ENCODE measurements at regions of chr18 and their contacts with region 1.

Region 1: GRCh38 chr18:62982600-62983251 is 267.4 kb downstream of the PHLPP1 start:
- DNase-seq: peak; percentile 29
- ATAC-seq: peak; percentile 58
- H3K4me3 Mint-ChIP-seq: no peak overlapping the region
- H3K27ac Mint-ChIP-seq: no peak overlapping the region
- H3K4me1 Mint-ChIP-seq: peaks cover 6% of the 10 kb centered on the region
- H3K27me3 Mint-ChIP-seq: no peaks in the 10 kb centered on the region
- CTCF ChIP-seq: peak; percentile 60

Region 2: DNA sequence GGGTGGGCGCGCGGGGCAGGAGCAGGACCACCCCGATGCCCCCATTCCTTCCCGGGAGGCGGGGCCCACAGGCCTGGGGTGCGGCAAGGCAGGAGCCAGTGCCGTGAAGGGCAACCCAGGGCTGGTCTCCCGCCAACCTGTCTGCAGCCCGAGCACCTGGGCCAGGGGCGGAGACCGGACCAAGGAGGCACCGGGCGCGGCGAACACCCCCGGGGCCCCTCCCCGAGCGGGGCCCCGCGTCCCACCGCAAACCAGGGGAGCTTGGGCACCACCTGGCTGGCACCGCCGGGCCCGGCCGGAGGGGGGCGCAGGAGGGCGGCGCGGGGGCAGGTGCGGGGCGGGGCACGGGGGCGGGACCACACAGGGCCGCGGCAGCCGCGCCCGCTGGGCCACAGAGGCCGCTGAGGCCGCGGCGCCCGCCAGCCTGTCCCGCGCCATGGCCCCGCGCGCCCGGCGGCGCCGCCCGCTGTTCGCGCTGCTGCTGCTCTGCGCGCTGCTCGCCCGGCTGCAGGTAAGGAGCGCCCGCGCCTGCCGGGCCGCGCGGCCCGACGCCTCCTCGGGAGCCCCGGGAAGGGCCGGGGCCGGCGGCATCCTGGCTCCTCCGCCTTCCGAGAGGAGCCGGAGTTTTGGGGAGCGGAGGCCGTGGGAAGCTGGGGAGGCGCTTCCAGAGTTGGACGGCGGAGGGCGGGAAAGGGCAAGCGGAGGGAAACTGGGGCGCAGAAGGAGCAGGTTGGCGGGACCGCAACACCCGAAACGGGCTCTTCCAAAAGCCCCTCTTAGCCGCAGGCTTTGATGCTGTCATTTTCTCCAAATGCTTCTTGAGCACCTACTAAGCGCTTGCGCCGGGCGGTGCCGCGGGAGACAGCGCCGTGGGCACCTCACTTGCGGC is 657.6 kb before region 1 on chr18 and contains the start of gene TNFRSF11A:
- CTCF ChIA-PET with region 1: no interaction called
- POLR2A ChIA-PET with region 1: no interaction called
- intact Hi-C with region 1: loop called (anchors 10 kb)
- DNase-seq: peak; percentile 61
- ATAC-seq: peak; percentile 93
- H3K4me3 Mint-ChIP-seq: peak within 1 kb of the TSS; percentile 76
- H3K27ac Mint-ChIP-seq: no peak within 1 kb of the TSS
- H3K4me1 Mint-ChIP-seq: peaks cover 21% of the 10 kb centered on the region
- H3K27me3 Mint-ChIP-seq: peaks cover 50% of the 10 kb centered on the region
- CTCF ChIP-seq: no peak
- total RNA-seq, gene TNFRSF11A: 0.07 and 0.24 TPM in 2 replicates

Region 3: GRCh38 chr18:62425465-62426195 is 557.1 kb before region 1 on chr18:
- CTCF ChIA-PET with region 1: no interaction called
- POLR2A ChIA-PET with region 1: no interaction called
- intact Hi-C with region 1: loop called (anchors 1 kb)
- DNase-seq: no peak
- ATAC-seq: no peak
- H3K4me3 Mint-ChIP-seq: no peak overlapping the region
- H3K27ac Mint-ChIP-seq: no peak overlapping the region
- H3K4me1 Mint-ChIP-seq: peaks cover 10% of the 10 kb centered on the region
- H3K27me3 Mint-ChIP-seq: peaks cover 3% of the 10 kb centered on the region
- CTCF ChIP-seq: peak; percentile 50

Region 4: DNA sequence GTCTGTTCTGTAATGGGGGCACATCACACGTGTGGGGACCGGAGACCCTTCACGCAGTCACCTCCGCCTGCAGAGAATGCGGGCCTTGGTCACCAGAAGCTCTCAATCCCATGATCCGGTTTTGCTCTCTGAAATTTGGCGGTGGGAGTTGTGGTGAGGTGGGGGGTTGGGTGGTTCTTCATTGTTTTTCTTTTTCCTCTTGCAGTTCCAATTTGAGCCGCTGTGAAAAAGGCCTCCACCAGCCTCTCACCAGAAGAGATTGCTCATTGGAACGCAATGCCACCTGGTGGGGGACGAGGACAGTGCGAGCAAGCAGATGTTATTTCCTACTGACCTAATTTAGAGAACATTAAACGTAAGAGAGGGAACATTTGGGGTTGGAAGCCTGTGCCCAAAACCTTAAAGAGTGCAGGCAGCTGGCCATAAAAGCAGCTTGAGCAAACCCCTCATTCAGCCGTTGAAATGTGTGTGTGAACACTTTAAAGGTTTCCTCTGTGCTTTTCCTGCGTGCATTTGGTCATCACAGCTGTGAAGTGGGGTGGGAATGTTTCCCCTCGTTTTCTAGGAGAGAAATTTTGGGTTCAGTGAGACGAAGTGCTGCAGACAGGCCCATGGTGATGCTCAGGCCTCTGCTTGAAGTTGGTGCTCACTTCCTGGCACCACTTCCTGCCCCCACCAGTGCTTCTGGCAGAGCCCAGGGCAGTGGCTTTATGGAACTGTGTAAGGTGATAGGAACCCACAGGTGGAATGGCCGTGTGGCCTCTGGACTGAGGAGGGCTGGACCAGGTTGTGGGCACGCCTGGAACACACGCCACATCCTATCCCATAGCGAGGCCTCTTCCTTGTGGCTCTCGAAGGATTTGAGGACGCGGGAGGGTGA is 398.2 kb before region 1 on chr18:
- CTCF ChIA-PET with region 1: interaction called, 37 read pairs
- POLR2A ChIA-PET with region 1: no interaction called
- intact Hi-C with region 1: loop called (anchors 1 kb)
- DNase-seq: peak; percentile 67
- ATAC-seq: peak; percentile 96
- H3K4me3 Mint-ChIP-seq: no peak overlapping the region
- H3K27ac Mint-ChIP-seq: no peak overlapping the region
- H3K4me1 Mint-ChIP-seq: peaks cover 26% of the 10 kb centered on the region
- H3K27me3 Mint-ChIP-seq: no peaks in the 10 kb centered on the region
- CTCF ChIP-seq: no peak

Region 5: DNA sequence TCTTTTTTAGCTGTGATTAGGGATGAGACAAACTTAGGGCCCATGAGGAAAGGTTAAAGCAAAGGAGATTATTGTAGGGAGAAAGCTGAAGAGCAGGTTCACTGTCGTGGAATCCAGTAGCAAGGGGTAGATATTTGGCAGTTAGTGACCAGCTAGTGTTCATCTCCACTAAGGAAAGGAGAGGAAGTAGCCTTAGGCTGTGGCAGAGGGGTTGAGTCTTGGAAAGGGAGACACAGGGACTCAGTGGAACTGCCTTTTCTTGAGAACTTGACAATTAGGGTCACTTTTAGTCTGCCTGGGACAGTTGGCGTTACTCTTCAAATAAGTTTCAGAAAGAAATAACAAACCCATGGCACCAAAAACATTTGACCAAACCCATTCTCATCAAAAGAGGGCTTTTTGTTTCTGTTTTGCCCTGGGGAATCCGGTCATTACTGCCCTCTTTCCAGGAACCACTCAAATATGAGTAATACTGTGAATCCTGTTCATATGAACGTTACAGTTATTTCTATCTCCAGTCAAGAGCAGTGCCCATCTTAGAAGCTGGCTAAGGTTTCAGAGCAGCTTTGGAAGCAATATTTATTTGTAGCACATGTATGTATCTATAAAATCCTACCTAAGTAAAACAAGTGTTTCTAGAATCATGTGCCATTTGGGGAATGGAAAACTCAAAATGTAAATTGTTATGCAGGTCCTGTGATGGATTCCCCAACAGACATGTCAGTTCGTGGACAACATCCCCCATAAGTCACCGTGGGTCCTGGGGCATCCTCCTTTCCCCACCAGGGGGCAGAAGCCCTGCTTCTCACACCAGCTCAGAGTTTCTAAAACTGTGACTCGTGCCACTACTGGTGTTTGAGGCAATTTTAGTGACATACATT is 344.7 kb before region 1 on chr18:
- CTCF ChIA-PET with region 1: interaction called, 38 read pairs
- POLR2A ChIA-PET with region 1: no interaction called
- intact Hi-C with region 1: loop called (anchors 1 kb)
- DNase-seq: peak; percentile 20
- ATAC-seq: peak; percentile 50
- H3K4me3 Mint-ChIP-seq: no peak overlapping the region
- H3K27ac Mint-ChIP-seq: no peak overlapping the region
- H3K4me1 Mint-ChIP-seq: no peaks in the 10 kb centered on the region
- H3K27me3 Mint-ChIP-seq: peaks cover 7% of the 10 kb centered on the region
- CTCF ChIP-seq: no peak

Region 6: DNA sequence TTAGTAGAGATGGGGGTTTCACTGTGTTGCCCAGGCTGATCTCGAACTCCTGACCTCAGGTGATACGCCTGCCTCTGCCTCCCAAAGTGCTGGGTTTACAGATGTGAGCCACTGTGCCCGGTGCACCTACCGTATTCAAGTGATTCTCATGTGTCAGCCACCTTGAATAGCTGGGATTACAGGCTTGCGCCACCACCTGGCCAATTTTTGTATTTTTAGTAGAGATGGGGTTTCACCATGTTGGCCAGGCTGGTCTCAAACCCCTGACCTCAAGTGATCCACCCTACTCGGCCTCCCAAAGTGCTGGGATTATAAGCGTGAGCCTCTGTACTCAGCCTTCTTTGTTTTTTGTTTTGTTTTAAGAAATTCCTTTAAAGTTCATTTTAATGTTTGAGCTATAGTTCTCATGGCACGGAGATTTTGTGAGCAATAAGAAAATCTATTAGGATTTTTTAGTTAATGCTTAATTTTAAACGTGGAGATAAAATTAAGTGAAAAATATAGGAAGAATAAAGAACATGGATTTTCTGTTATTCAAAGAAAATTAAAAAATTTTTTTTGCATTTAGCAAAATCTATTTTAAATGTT is 24.7 kb before region 1 on chr18:
- CTCF ChIA-PET with region 1: interaction called, 3 read pairs
- POLR2A ChIA-PET with region 1: no interaction called
- intact Hi-C with region 1: loop called (anchors 2 kb)
- DNase-seq: no peak
- ATAC-seq: peak; percentile 77
- H3K4me3 Mint-ChIP-seq: no peak overlapping the region
- H3K27ac Mint-ChIP-seq: no peak overlapping the region
- H3K4me1 Mint-ChIP-seq: no peaks in the 10 kb centered on the region
- H3K27me3 Mint-ChIP-seq: no peaks in the 10 kb centered on the region
- CTCF ChIP-seq: no peak

Region 7: GRCh38 chr18:63253428-63254372 is 271.0 kb after region 1 on chr18:
- CTCF ChIA-PET with region 1: no interaction called
- POLR2A ChIA-PET with region 1: no interaction called
- intact Hi-C with region 1: no loop called
- DNase-seq: no peak
- ATAC-seq: no peak
- H3K4me3 Mint-ChIP-seq: no peak overlapping the region
- H3K27ac Mint-ChIP-seq: peak overlapping the region; percentile 7
- H3K4me1 Mint-ChIP-seq: peaks cover 58% of the 10 kb centered on the region
- H3K27me3 Mint-ChIP-seq: no peaks in the 10 kb centered on the region
- CTCF ChIP-seq: no peak